ENCODE measurements at regions of chr3 and their contacts with region 1.

Region 1: GRCh38 chr3:48685602-48686511 is at the start of gene NCKIPSD:
- DNase-seq: peak; percentile 98
- H3K4me3 ChIP-seq: peak within 1 kb of the TSS; percentile 85 to 96
- H3K27ac ChIP-seq: peak within 1 kb of the TSS; percentile 22 to 85
- H3K4me1 ChIP-seq: peaks cover 20 to 47% of the 10 kb centered on the region in 2 experiments
- H3K27me3 ChIP-seq: no peaks in the 10 kb centered on the region
- CTCF ChIP-seq: peak; percentile 73
- EP300 ChIP-seq: no peak
- RAD21 ChIP-seq: peak; percentile 61
- polyA plus RNA-seq, gene NCKIPSD: 20.4 and 24.9 TPM in 2 replicates

Region 2: GRCh38 chr3:48338635-48339034 is 347.2 kb before region 1 on chr3:
- CTCF ChIA-PET with region 1: no interaction called
- POLR2A ChIA-PET with region 1: no interaction called
- DNase-seq: no peak
- H3K4me3 ChIP-seq: no peak overlapping the region
- H3K27ac ChIP-seq: no peak overlapping the region
- H3K4me1 ChIP-seq: no peaks in the 10 kb centered on the region; a peak in 1 of 4 replicates
- H3K27me3 ChIP-seq: peaks cover 7% of the 10 kb centered on the region; the same call in 1 of the 2 replicates
- CTCF ChIP-seq: no peak
- EP300 ChIP-seq: no peak
- RAD21 ChIP-seq: no peak

Region 3: GRCh38 chr3:48415554-48415953 is 270.3 kb before region 1 on chr3:
- CTCF ChIA-PET with region 1: no interaction called
- POLR2A ChIA-PET with region 1: no interaction called
- DNase-seq: peak; percentile 31
- H3K4me3 ChIP-seq: no peak overlapping the region
- H3K27ac ChIP-seq: no peak overlapping the region
- H3K4me1 ChIP-seq: no peaks in the 10 kb centered on the region; a peak in 1 of 4 replicates
- H3K27me3 ChIP-seq: no peaks in the 10 kb centered on the region
- CTCF ChIP-seq: no peak
- EP300 ChIP-seq: no peak
- RAD21 ChIP-seq: no peak

Region 4: GRCh38 chr3:48716982-48717746 is 31.3 kb after region 1 on chr3 and contains the start of gene IP6K2:
- CTCF ChIA-PET with region 1: interaction called, 20 read pairs
- POLR2A ChIA-PET with region 1: interaction called, 6 read pairs
- DNase-seq: peak; percentile 94
- H3K4me3 ChIP-seq: peak within 1 kb of the TSS; percentile 84 to 90
- H3K27ac ChIP-seq: peak within 1 kb of the TSS; percentile 85 to 94
- H3K4me1 ChIP-seq: peaks cover 8 to 13% of the 10 kb centered on the region in 2 experiments; a peak in 3 of 4 replicates
- H3K27me3 ChIP-seq: no peaks in the 10 kb centered on the region
- CTCF ChIP-seq: no peak
- EP300 ChIP-seq: peak; percentile 40 to 93; a peak in 3 of 4 replicates
- RAD21 ChIP-seq: no peak
- polyA plus RNA-seq, gene IP6K2: 178 and 219 TPM in 2 replicates